ENCODE measurements at regions of chr19 and their contacts with region 1.

Region 1: DNA sequence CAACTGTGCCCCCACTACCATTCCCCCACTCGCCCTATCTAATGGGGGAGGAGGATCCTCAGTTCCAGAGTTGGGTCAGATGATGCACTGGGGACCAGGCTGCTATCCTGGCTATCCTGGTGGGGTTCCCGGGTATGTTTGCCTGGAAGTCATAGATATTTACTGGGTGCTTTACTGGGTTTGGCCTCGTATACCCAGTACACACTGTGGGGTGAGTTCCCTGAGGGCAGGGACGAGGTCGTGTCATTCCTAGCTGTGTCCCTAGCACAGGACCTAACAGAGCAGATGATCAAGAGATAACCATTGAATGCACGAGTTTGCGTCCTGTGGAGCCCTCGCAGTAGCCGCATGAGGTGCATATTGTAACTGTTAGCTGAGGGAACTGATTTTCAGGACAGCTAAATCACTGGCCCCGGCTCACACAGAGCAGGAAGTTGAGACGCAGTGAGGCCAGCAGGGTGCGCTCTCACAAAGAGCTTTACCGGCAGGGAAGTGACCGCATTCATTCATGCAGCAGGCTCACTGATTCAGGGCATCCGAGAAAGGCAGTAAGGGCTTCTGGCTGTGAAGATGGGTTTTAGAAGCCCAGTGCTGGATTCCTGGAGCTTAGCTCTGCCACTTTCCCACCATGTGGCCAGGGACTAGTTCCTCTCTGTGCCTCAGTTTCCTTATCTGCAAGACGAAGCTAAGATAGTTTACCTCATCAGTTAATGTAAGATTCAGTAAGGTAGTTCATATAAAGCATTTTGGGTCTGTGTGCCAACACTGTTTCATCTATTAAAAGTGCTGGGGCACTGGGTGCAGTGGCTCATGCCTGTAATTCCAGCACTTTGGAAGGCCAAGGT is 6.0 kb downstream of the RUVBL2 start:
- DNase-seq: peak; percentile 89
- H3K4me3 ChIP-seq: no peak overlapping the region
- H3K27ac ChIP-seq: no peak overlapping the region
- H3K4me1 ChIP-seq: peaks cover 10% of the 10 kb centered on the region
- H3K27me3 ChIP-seq: no peaks in the 10 kb centered on the region
- CTCF ChIP-seq: peak; percentile 94

Region 2: DNA sequence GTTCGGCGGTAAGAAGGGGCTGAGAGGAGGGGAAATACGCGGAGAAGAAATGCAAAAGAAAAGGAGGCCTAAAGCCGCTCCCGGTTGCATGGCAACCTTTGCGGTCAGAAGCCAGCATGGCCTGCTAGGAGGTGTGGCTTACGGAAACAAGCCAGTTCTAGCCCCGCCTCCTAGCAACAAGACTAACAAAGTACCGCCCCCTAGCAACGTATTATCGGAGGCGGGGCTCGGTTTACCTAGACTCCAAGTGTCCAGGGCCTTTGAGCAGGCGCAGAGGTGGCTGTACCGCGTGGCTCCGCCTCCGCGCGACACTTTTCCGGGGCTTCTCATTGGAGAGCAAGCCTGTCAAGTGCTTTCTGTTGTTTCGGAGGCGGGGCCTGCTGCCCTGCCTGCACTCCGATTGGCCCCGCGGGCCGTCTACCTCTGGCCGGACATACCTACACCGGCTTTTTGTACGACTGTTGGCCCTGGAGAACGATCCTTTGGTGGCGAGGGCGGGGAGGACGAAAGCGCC is 530.9 kb before region 1 on chr19:
- CTCF ChIA-PET with region 1: no interaction called
- POLR2A ChIA-PET with region 1: no interaction called
- intact Hi-C with region 1: no loop called
- DNase-seq: peak; percentile 100
- H3K4me3 ChIP-seq: peak overlapping the region; percentile 87
- H3K27ac ChIP-seq: peak overlapping the region; percentile 99
- H3K4me1 ChIP-seq: peaks cover 21% of the 10 kb centered on the region
- H3K27me3 ChIP-seq: no peaks in the 10 kb centered on the region
- CTCF ChIP-seq: no peak

Region 3: DNA sequence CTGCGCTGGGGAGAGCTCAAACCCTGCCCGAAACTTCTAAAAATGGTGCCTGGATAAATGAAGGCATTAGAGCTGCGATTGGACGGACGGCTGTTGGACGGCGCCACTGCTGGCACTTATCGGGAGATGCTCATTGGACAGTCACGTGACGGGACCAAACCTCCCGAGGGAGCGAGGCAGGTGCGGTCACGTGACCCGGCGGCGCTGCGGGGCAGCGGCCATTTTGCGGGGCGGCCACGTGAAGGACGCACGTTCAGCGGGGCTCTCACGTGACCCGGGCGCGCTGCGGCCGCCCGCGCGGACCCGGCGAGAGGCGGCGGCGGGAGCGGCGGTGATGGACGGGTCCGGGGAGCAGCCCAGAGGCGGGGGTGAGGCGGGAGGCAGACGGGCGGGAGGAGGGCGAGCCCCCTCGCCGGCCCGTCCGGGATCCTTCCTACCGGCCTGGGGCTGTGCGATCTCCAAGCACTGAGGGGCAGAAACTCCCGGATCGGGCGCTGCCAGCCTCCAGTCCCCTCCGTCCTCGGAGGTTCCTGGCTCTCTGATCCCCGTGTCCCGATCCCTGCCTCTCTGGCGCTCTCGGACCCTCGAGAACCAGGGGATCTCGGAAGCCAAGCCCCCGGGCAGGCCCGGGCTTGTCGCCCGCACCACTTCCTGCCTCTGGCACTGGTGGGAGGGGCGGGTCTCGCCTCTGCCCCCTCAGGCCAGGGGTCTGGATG is 45.0 kb before region 1 on chr19 and contains the start of gene BAX:
- CTCF ChIA-PET with region 1: interaction called, 11 read pairs
- POLR2A ChIA-PET with region 1: no interaction called
- intact Hi-C with region 1: no loop called
- DNase-seq: peak; percentile 98
- H3K4me3 ChIP-seq: peak within 1 kb of the TSS; percentile 81
- H3K27ac ChIP-seq: peak within 1 kb of the TSS; percentile 83
- H3K4me1 ChIP-seq: peaks cover 10% of the 10 kb centered on the region
- H3K27me3 ChIP-seq: no peaks in the 10 kb centered on the region
- CTCF ChIP-seq: no peak
- total RNA-seq, gene BAX: 103 and 112 TPM in 2 replicates

Region 4: GRCh38 chr19:49106648-49107135 is 107.0 kb after region 1 on chr19:
- CTCF ChIA-PET with region 1: interaction called, 10 read pairs
- POLR2A ChIA-PET with region 1: no interaction called
- intact Hi-C with region 1: no loop called
- DNase-seq: peak; percentile 78
- H3K4me3 ChIP-seq: no peak overlapping the region
- H3K27ac ChIP-seq: no peak overlapping the region
- H3K4me1 ChIP-seq: peaks cover 25% of the 10 kb centered on the region
- H3K27me3 ChIP-seq: no peaks in the 10 kb centered on the region
- CTCF ChIP-seq: peak; percentile 96